ENCODE measurements at regions of chr7 and their contacts with region 1.

Region 1: DNA sequence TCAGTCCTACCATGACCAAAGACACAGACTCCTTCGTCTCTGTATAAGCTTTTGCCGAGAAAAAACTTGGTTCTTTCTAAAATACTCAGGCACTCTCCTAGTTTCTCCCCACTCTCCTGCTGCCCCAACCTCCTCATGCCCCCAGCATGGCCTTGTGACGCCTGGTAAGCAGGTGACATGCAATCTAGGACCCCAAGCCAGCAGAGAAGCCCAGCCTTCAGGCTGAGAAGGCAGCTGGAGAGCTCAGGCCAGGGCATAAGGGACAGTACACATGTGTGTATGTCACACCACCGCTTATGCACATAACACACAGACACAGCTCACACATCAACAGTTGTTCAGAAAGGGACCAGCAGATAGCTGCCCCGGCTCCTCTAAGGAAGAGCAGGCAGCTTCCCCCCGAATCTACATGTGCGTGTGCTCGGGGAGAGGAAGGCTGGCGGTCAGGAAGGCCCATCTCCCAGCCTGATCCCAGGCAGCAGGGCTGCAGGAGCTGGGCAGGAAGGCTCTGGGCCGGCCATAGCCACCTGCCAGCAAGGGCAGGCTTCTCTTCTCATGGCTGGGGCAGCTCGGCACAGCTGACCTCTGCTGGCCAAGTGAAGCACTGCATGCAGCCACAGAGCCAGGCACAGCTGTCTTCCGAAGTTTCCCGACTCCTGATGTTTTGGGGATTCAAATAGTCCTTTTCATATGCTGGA is 8.5 kb downstream of the DDX56 start:
- DNase-seq: peak; percentile 42
- H3K4me3 ChIP-seq: no peak overlapping the region
- H3K27ac ChIP-seq: no peak overlapping the region
- H3K4me1 ChIP-seq: no peaks in the 10 kb centered on the region
- H3K27me3 ChIP-seq: no peaks in the 10 kb centered on the region
- CTCF ChIP-seq: peak; percentile 98 to 99

Region 2: DNA sequence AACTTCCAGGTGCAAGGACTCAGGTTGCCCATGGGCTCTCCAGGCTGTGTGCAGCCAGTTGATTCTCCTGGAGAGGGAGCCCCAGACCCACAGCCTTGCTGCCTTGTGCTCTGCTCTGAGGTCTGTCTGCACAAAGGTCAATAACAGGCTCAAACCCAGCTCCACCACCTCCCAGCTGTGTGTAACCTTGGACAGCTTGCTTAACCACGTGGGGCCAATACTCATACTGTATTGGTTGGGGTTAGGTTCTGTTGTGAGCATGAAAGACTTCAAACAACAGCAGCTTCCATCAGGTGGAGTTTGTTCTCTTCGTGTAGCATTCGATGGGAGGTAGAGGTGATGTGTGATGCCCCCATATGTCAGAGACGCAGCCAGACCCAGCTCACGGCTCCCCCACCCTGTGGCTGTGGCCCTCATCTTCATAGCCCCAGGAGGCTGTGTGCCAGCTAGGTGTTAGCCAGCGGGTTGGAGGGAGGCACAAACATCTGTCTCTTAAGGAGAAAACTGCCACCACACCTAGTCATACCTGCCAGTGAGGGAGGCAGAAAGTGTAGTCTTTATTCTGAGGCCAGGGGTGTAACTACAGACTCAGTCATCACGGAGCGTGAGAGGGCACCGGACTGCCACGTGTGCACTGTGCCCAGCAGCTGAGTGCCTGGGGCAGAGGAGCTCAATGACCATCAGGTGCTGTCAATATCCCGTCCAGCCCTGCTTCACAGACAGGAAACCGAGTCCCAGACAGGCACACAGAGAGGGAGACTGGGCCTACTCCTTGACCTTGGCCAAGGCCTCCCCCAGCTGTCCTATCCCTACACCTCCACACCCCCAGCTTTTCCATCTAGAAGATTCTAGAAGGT is 433.8 kb before region 1 on chr7:
- CTCF ChIA-PET with region 1: no interaction called
- dilution Hi-C with region 1: no loop called
- in situ Hi-C with region 1: no loop called
- intact Hi-C with region 1: loop called (anchors 5 kb)
- DNase-seq: peak; percentile 6
- H3K4me3 ChIP-seq: no peak overlapping the region
- H3K27ac ChIP-seq: no peak overlapping the region
- H3K4me1 ChIP-seq: no peaks in the 10 kb centered on the region
- H3K27me3 ChIP-seq: no peaks in the 10 kb centered on the region
- CTCF ChIP-seq: peak; percentile 35 to 58

Region 3: DNA sequence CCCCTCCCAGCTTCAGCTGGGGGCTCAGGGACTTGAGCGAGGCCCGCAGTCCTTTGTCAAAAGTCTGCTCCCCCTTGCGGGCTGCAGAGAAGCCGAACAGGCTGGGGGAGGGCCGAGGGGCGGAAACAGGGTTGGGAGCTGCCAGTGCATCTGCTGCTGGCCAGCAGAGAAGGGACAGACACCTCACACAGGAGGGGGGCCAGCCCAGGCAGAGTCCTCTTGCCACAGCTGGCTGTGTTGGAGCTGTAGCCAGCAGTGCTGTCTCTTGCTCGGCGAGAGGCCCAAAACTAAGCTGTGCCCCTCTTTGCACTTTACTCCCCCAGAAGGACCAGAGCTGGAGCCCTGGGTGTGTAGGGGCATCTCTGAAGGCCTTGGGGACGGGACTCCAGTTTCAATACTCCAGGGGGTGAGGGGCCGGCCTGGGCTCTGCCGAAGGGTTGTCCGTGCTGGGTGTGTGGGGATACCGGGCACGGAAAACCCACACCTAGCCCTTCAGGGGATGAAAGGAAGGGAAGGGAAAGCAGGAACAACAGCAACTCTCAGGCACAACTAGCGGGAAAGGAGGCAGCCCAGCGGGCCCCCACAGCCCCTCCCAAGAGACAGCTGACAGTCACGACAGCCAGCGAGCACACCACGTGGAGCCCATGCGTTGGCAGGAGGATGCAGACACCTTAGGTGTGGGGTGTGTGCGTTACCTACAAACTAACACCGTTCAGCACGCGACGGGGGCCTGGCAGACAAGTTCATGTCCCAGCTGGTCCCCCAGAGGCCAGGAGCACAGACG is 346.6 kb before region 1 on chr7:
- CTCF ChIA-PET with region 1: no interaction called
- dilution Hi-C with region 1: no loop called
- in situ Hi-C with region 1: loop called in 1 of 2 experiments (anchors 25 kb)
- intact Hi-C with region 1: loop called (anchors 10 kb)
- DNase-seq: no peak
- H3K4me3 ChIP-seq: no peak overlapping the region
- H3K27ac ChIP-seq: no peak overlapping the region
- H3K4me1 ChIP-seq: no peaks in the 10 kb centered on the region
- H3K27me3 ChIP-seq: no peaks in the 10 kb centered on the region
- CTCF ChIP-seq: no peak

Region 4: DNA sequence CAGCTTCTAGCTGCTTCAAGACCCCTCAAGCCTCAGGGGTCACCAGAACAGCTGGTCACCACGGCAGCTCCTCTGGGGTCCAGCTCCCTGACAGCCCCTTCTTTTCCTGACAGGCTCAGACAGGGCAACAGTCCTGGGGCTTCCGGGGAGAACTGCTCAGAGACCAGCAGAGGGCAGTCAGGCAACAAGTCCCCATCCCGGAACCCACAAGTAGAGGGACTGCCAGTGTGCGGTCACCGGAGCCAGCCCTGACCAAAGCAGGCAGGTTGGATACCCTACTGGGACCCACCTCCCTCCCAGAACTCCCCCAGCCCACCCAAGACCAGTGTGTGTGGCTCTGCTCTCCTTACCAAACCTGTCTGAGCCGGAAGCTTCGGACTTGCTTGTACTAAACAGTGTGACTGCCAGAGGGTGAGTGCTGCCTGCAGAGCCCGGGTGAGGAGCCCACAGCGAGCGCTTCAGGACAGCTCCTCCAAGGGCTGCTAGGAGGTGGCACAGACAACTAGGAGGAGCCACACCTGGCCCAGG is 324.2 kb before region 1 on chr7:
- CTCF ChIA-PET with region 1: interaction called, 4 read pairs
- dilution Hi-C with region 1: loop called (anchors 5 kb)
- in situ Hi-C with region 1: no loop called
- intact Hi-C with region 1: loop called (anchors 1 kb)
- DNase-seq: peak; percentile 64
- H3K4me3 ChIP-seq: peak overlapping the region in 2 of 3 experiments; percentile 10 to 15
- H3K27ac ChIP-seq: no peak overlapping the region
- H3K4me1 ChIP-seq: peaks cover 8% of the 10 kb centered on the region
- H3K27me3 ChIP-seq: no peaks in the 10 kb centered on the region
- CTCF ChIP-seq: peak; percentile 63 to 87

Region 5: GRCh38 chr7:44247868-44248651 is 317.2 kb before region 1 on chr7:
- CTCF ChIA-PET with region 1: no interaction called
- dilution Hi-C with region 1: loop called (anchors 5 kb)
- in situ Hi-C with region 1: no loop called
- intact Hi-C with region 1: no loop called
- DNase-seq: no peak
- H3K4me3 ChIP-seq: no peak overlapping the region
- H3K27ac ChIP-seq: no peak overlapping the region
- H3K4me1 ChIP-seq: no peaks in the 10 kb centered on the region
- H3K27me3 ChIP-seq: no peaks in the 10 kb centered on the region
- CTCF ChIP-seq: no peak

Region 6: GRCh38 chr7:44348300-44348699 is 216.9 kb before region 1 on chr7:
- CTCF ChIA-PET with region 1: interaction called, 4 read pairs
- dilution Hi-C with region 1: no loop called
- in situ Hi-C with region 1: no loop called
- intact Hi-C with region 1: loop called (anchors 1 kb)
- DNase-seq: no peak
- H3K4me3 ChIP-seq: no peak overlapping the region
- H3K27ac ChIP-seq: no peak overlapping the region
- H3K4me1 ChIP-seq: no peaks in the 10 kb centered on the region
- H3K27me3 ChIP-seq: no peaks in the 10 kb centered on the region
- CTCF ChIP-seq: peak; percentile 23 to 38

Region 7: GRCh38 chr7:44490351-44491200 is 74.7 kb before region 1 on chr7 and contains the start of gene NUDCD3:
- CTCF ChIA-PET with region 1: interaction called, 3 read pairs
- dilution Hi-C with region 1: loop called (anchors 5 kb)
- in situ Hi-C with region 1: no loop called
- intact Hi-C with region 1: loop called (anchors 1 kb)
- DNase-seq: peak; percentile 87
- H3K4me3 ChIP-seq: peak within 1 kb of the TSS; percentile 68 to 87 (median 83)
- H3K27ac ChIP-seq: peak within 1 kb of the TSS; percentile 97
- H3K4me1 ChIP-seq: peaks cover 19% of the 10 kb centered on the region
- H3K27me3 ChIP-seq: no peaks in the 10 kb centered on the region
- CTCF ChIP-seq: peak in 1 of 2 donors; percentile 32
- total RNA-seq, gene NUDCD3: 77.2 to 122 TPM

Region 8: GRCh38 chr7:44622307-44623151 is 57.3 kb after region 1 on chr7:
- CTCF ChIA-PET with region 1: no interaction called
- dilution Hi-C with region 1: no loop called
- in situ Hi-C with region 1: no loop called
- intact Hi-C with region 1: no loop called
- DNase-seq: no peak
- H3K4me3 ChIP-seq: no peak overlapping the region
- H3K27ac ChIP-seq: no peak overlapping the region
- H3K4me1 ChIP-seq: peaks cover 20% of the 10 kb centered on the region
- H3K27me3 ChIP-seq: no peaks in the 10 kb centered on the region
- CTCF ChIP-seq: no peak